Lower leg skin (tissue), 4 donors: ENCODE measurements at regions of chr6 and their contacts with region 1.

Region 1: DNA sequence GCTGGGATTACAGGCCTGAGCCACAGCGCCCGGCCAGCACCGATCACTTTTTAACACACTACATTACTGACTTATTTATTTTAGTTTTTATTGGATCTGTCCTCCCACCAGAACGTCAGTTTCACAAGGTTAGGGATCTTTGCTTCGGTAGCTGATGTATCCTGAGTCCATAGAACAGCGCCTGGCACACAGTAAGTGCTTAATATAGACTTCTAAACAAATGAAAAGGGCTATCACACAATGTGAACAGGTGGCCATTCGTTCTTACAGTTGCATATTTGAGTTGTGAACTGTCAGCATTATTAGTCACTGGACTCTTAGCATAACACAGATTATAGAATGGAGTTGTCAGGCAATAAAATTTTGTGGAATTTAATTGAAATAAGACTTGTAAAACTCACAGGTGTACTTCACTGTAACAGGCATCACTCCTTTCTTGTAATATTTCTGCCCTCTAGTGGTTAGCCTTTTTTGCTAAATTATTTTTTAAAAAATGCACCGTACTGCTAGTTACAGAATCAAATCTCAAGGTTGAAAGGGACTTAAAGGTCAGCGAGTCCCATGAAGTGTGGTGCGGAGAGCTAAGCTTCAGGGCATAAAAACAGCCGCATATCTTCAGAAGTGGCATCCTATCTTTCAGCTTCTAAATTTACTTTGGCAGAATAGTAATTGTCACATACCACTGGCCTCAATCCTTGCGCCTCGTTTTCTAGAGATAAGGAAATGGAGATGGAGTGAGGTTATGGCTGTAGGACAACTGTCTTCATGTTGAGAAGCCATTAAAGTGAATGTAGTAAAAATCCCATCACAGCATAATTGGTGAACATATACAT is 3.4 kb upstream of the TBC1D7 start:
- DNase-seq: no peak
- H3K4me3 ChIP-seq: no peak overlapping the region
- CTCF ChIP-seq: no peak
- POLR2A ChIP-seq: no peak

Region 2: DNA sequence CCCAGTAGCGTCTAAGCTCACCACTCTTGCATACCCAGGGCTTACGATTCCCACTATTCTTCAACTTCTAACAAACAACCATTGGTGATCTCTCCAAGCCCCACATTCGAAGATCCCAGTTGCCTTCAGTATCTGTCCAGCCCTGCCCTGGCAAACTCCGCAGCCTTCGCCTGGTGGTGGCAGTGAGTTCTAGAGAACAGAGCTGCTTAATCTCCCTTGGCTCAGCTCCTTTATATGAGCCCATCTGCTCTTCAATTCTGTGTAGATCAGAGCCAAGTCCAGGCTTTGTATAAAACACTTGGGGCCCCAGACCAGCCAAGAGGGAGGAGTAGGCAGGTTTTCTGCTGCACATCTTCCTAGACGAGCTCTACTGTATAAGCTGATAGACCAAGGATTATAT is 421.9 kb before region 1 on chr6:
- intact Hi-C with region 1: loop called (anchors 5 kb)
- DNase-seq: no peak
- H3K4me3 ChIP-seq: no peak overlapping the region
- CTCF ChIP-seq: no peak
- POLR2A ChIP-seq: no peak

Region 3: DNA sequence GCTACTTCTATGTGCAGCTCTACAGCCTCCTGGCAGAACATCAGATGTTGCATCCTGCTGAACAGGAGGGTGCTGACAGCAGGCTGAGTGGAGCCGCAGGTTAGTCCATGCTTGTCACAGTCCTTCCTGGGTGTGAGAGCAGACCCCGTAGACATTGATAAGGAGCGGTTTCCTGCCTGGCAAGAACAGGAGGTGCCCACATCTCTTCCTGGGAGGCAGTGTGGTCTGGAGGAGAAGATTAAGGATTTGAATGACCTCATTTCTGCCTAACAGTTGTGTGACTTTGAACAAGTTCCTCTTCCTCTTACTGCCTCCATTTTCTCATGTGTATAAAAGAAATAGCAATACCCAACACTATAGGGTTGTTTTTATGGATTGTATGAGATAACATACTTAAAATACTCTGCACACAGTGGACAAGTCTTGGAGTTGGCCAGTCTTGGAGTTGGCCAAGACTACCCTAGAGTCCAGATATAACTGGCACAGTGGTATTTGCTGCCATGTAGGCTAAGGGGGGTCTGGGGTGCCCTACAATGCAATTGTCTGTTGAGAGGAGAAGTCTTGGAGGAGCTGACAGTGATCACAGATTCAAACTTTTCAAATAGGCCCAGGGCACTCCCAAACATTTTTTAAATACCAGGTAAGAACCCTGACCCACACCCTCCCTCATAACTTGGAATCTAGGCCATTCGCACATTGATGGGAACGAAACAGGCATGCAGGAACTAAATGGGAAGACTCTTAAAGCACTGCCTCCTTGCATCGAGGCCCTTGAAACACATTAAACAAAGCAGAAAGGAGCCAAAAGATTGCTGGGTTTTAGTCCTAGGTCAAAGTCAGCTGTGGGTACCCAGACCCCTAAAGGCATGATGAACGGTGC is 29.2 kb after region 1 on chr6:
- intact Hi-C with region 1: no loop called
- DNase-seq: no peak
- H3K4me3 ChIP-seq: no peak overlapping the region
- CTCF ChIP-seq: no peak
- POLR2A ChIP-seq: no peak